ENCODE measurements at regions of chr22 and their contacts with region 1.

Region 1: GRCh38 chr22:31637938-31638618 is 23.9 kb downstream of the PISD start:
- DNase-seq: peak; percentile 52
- H3K4me3 ChIP-seq: peak overlapping the region in 2 of 4 donors; percentile 3 to 16
- H3K27ac ChIP-seq: peak overlapping the region; percentile 55 to 63 (median 56)
- H3K4me1 ChIP-seq: peaks cover 0 to 34% (median 20%) of the 10 kb centered on the region in 4 donors
- H3K27me3 ChIP-seq: no peaks in the 10 kb centered on the region
- CTCF ChIP-seq: no peak
- EP300 ChIP-seq: no peak
- POLR2A ChIP-seq: no peak

Region 2: DNA sequence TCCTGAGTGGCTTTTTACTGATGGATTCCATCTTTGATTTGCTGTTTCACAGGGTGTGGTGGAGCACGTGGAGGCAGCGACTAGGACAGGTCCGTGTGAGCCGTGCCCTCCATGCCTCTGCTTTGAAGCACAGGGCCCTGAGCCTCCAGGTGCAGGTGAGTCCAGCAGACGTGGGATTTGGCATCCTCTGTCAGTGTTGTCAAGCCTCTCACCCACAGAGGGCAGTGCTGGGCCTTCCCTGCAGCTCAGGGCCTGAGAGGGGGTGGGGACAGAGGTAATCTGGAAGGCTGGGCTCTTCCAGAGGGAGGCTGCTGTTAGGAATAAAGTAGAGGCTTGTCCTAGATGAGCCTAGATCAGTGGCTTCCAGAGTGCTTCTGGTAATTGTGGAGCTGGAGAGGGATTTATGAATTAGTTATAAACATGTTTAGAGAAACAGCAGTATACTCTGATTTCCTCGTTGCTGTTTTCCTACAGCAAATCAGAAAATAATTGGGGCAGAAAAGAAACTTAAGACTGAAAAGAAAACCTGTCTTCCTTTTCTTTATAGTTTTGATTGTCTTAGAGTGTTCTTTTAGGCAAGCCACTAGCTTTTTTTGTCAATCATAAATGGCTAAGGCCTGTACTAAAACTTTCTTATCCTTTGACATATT is 76.7 kb before region 1 on chr22:
- in situ Hi-C with region 1: loop called in 3 of 4 experiments (anchors 5 to 10 kb)
- intact Hi-C with region 1: loop called (anchors 5 kb)
- DNase-seq: peak; percentile 84
- H3K4me3 ChIP-seq: no peak overlapping the region
- H3K27ac ChIP-seq: no peak overlapping the region
- H3K4me1 ChIP-seq: no peaks in the 10 kb centered on the region
- H3K27me3 ChIP-seq: no peaks in the 10 kb centered on the region
- CTCF ChIP-seq: peak; percentile 63 to 77 (median 66)
- EP300 ChIP-seq: no peak
- POLR2A ChIP-seq: no peak

Region 3: GRCh38 chr22:31983911-31984656 is 346.0 kb after region 1 on chr22:
- in situ Hi-C with region 1: no loop called
- intact Hi-C with region 1: no loop called
- DNase-seq: no peak
- H3K4me3 ChIP-seq: no peak overlapping the region
- H3K27ac ChIP-seq: no peak overlapping the region
- H3K4me1 ChIP-seq: no peaks in the 10 kb centered on the region
- H3K27me3 ChIP-seq: no peaks in the 10 kb centered on the region
- CTCF ChIP-seq: no peak
- EP300 ChIP-seq: no peak
- POLR2A ChIP-seq: no peak

Measured in transverse colon (tissue), 4 donors.